ENCODE measurements at regions of chr9 and their contacts with region 1.

Region 1: GRCh38 chr9:92140074-92140753 is 25.0 kb upstream of the SPTLC1 start:
- DNase-seq: peak; percentile 54
- H3K4me3 Mint-ChIP-seq: no peak overlapping the region
- H3K27ac Mint-ChIP-seq: no peak overlapping the region
- H3K4me1 Mint-ChIP-seq: peaks cover 7% of the 10 kb centered on the region
- H3K27me3 Mint-ChIP-seq: peaks cover 33% of the 10 kb centered on the region

Region 2: DNA sequence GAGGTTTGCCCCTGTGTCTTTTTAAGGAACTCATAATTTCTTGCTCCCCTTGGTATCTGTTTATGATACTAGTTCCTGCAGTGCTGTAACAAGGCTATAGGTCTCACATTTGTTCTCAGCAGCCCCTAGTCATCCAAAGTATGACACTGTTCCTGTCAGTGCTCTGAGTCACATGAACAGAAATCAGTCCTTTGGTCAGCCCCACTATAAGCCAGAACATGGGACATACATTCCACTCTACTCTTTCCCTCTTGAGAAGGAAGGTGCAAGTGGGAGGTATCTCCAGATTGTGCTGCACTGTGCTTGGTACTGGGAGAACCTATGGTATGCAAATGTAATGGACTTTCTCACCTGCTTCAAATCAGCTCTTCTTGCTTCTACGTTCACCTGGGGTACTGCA is 66.3 kb after region 1 on chr9:
- intact Hi-C with region 1: loop called (anchors 5 kb)
- DNase-seq: no peak
- H3K4me3 Mint-ChIP-seq: no peak overlapping the region
- H3K27ac Mint-ChIP-seq: no peak overlapping the region
- H3K4me1 Mint-ChIP-seq: no peaks in the 10 kb centered on the region
- H3K27me3 Mint-ChIP-seq: no peaks in the 10 kb centered on the region